ENCODE measurements at regions of chr9 and their contacts with region 1.

Region 1: DNA sequence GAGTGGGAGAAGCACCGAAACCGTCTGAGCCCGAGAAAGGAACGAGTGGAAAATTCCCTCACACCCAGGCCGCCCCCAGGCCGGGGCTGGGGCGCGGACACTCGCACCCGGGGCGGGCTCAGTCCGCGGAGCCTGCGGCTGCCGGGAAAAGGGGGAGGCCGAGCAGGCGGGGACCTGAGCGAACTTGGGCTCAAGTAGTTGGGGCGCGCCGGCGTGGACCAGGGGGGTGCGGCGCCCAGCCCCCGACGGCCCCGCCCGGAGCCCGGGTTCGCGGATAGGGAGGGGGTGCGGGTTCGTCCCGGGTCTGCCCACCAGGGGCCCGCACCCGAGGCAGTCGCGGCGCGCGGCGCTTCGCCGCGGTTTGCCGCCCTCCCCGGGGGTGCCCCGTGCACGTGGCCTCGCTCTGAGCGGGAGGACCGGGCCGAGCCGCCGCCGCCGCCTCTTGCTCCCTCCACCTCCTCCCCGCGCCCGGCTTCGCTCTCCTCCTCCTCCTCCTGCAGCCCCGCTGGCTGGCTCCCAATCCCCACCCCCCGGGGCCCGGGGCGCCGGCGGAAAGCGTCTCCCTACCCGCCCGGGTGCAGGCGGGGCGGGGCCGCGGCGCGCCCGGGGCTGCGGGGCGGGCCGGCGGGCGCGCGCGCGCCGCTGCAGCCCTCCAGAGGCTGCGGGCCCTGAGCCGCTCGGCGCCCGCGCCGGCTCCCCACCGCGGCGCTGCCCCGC is 1.1 kb upstream of the NFIB start:
- DNase-seq: no peak
- H3K4me3 Mint-ChIP-seq: peak overlapping the region; percentile 67
- H3K27ac Mint-ChIP-seq: no peak overlapping the region
- H3K4me1 Mint-ChIP-seq: peaks cover 16% of the 10 kb centered on the region
- H3K27me3 Mint-ChIP-seq: peaks cover 62% of the 10 kb centered on the region

Region 2: DNA sequence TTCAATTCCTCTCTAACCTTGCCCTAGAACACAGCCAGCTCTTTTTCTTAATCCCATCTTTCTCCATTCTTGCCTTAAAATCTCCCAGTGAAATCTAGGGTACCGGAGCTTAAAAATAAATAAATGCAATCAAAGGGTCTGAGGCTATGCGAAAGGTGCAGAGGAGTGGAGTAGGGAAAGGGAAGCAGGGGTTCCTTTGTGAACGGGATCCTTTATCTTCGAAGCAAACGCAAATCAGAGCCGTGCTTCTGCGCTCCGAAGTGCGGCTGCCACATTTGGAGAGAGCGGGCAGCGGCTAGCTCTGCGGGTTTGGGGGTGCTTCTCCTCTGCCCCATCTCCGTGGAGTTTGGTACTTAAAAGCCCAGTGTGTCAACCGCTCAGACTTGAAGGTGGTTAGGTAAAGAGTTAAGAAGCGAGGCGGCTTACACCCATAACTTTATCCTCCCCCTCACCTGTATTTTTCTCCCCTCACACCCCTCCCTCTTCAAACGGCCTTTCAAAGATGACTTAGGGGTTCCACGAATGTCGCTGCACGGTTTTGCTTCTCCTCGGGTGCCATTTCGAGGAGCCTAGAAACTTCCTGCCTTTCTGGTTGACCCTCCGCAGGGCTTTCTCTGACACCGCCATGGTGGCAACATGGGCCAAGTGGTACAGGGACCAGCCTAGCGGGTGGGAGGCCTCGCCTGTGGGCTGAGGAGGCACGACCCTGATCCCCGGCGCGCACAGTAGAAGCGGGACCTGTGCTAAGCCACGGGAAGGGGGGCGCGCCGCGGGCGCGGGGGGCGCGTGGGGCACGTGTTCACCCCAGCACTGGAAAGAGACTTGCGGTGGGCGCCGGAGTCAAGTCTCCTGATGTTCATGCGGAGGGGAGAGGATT is 30.5 kb after region 1 on chr9:
- intact Hi-C with region 1: loop called (anchors 1 kb)
- DNase-seq: no peak
- H3K4me3 Mint-ChIP-seq: no peak overlapping the region
- H3K27ac Mint-ChIP-seq: no peak overlapping the region
- H3K4me1 Mint-ChIP-seq: peaks cover 5% of the 10 kb centered on the region
- H3K27me3 Mint-ChIP-seq: peaks cover 50% of the 10 kb centered on the region

Region 3: GRCh38 chr9:14561929-14562405 is 246.9 kb after region 1 on chr9:
- intact Hi-C with region 1: no loop called
- DNase-seq: no peak
- H3K4me3 Mint-ChIP-seq: no peak overlapping the region
- H3K27ac Mint-ChIP-seq: no peak overlapping the region
- H3K4me1 Mint-ChIP-seq: peaks cover 9% of the 10 kb centered on the region
- H3K27me3 Mint-ChIP-seq: peaks cover 5% of the 10 kb centered on the region